Activated CD4-positive, alpha-beta memory T cell treated with anti-CD3 and anti-CD28 coated beads for 36 hours (primary cell): ENCODE measurements at regions of chr1 and their contacts with region 1.

Region 1: GRCh38 chr1:22089787-22090186 is 37.3 kb downstream of the CDC42 start:
- DNase-seq: no peak
- H3K4me3 Mint-ChIP-seq: peak overlapping the region; percentile 36
- H3K27ac Mint-ChIP-seq: peak overlapping the region; percentile 87
- H3K4me1 Mint-ChIP-seq: peaks cover 88% of the 10 kb centered on the region
- H3K27me3 Mint-ChIP-seq: no peaks in the 10 kb centered on the region

Region 2: DNA sequence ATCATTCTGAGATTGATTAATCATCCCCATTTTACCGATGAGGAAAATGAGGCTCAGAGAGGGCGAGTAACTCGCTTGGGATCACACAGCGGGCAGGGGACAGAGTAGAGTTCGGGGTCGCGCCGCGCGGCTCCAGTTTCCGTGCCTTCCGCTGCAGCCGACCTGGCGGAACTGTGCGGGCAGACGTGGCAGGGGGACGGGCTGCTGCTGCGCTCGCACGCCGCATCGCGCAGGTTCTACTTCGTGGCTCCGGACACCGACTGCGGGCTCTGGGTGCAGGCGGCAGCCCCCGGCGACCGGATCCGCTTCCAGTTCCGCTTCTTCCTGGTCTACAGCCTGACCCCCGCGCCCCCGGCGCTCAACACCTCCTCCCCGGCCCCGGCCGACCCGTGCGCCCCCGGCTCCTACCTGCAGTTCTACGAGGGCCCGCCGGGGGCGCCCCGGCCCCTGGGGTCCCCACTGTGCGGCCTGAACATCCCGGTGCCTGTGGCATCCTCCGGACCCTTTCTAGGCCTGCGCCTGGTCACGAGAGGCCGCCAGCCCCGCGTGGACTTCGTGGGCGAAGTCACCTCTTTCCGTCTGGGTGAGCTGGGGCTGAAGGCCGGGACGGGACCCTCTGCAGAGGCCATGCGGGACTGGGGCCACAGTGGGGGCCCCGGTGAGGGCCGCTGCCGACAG is 275.4 kb before region 1 on chr1:
- CTCF ChIA-PET with region 1: no interaction called
- POLR2A ChIA-PET with region 1: no interaction called
- intact Hi-C with region 1: no loop called
- DNase-seq: peak; percentile 36
- H3K4me3 Mint-ChIP-seq: peak overlapping the region; percentile 23
- H3K27ac Mint-ChIP-seq: no peak overlapping the region
- H3K4me1 Mint-ChIP-seq: peaks cover 4% of the 10 kb centered on the region
- H3K27me3 Mint-ChIP-seq: peaks cover 12% of the 10 kb centered on the region

Region 3: GRCh38 chr1:22105611-22106207 is 15.9 kb after region 1 on chr1:
- CTCF ChIA-PET with region 1: interaction called, 11 read pairs
- POLR2A ChIA-PET with region 1: interaction called, 4 read pairs
- intact Hi-C with region 1: loop called (anchors 1 kb)
- DNase-seq: peak; percentile 29
- H3K4me3 Mint-ChIP-seq: no peak overlapping the region
- H3K27ac Mint-ChIP-seq: peak overlapping the region; percentile 72
- H3K4me1 Mint-ChIP-seq: peaks cover 50% of the 10 kb centered on the region
- H3K27me3 Mint-ChIP-seq: no peaks in the 10 kb centered on the region

Region 4: DNA sequence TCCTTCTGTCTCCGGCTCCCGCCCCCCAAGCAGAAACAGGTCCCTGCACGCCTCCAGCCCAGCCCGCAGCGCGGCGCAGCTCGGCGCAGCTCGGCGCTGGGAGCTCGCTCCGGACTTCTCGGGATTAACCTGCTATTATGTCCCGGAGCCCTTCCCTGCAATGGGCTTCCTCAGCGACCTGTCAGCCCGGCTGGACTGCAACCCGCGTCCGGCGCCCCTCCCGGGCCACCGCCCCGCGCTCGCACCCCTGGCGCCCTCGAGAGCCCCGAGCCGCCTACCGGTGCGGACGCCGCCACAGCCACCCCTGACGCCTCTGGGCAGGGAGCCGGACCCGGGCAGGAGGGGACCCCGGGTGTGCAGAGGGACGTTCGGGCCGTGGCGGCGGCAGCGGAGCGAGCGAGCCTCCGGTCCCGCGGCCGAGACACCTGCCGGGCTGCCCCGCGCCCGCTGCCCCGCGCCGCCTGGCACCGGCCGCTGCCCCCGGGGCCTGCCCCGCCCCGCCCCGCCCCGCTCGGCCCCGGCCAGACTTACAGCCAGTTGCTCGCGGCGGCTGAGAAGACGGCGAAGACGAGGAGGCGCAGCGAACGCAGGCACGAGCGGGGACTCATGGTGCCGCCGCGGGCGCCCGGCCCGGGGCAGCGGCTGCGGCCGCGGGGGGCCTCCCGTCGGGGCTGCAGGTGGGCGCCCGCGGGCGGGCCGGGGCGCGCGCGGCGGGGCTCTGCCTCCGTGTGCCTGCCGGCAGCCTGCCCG is 52.7 kb after region 1 on chr1:
- CTCF ChIA-PET with region 1: no interaction called
- POLR2A ChIA-PET with region 1: no interaction called
- intact Hi-C with region 1: no loop called
- DNase-seq: peak; percentile 18
- H3K4me3 Mint-ChIP-seq: no peak overlapping the region
- H3K27ac Mint-ChIP-seq: no peak overlapping the region
- H3K4me1 Mint-ChIP-seq: peaks cover 6% of the 10 kb centered on the region
- H3K27me3 Mint-ChIP-seq: peaks cover 46% of the 10 kb centered on the region